Lower leg skin (tissue), 4 donors: ENCODE measurements at regions of chr9 and their contacts with region 1.

Region 1: GRCh38 chr9:114087721-114088120 is 9.6 kb upstream of the AMBP start:
- DNase-seq: peak in 1 of 2 donors; percentile 78
- H3K4me3 ChIP-seq: no peak overlapping the region
- CTCF ChIP-seq: no peak
- POLR2A ChIP-seq: no peak

Region 2: GRCh38 chr9:114310471-114311450 is 223.0 kb after region 1 on chr9:
- intact Hi-C with region 1: loop called (anchors 1 kb)
- DNase-seq: peak in 1 of 2 donors; percentile 74
- H3K4me3 ChIP-seq: no peak overlapping the region
- CTCF ChIP-seq: no peak
- POLR2A ChIP-seq: no peak